ENCODE measurements at regions of chr19 and their contacts with region 1.

Region 1: DNA sequence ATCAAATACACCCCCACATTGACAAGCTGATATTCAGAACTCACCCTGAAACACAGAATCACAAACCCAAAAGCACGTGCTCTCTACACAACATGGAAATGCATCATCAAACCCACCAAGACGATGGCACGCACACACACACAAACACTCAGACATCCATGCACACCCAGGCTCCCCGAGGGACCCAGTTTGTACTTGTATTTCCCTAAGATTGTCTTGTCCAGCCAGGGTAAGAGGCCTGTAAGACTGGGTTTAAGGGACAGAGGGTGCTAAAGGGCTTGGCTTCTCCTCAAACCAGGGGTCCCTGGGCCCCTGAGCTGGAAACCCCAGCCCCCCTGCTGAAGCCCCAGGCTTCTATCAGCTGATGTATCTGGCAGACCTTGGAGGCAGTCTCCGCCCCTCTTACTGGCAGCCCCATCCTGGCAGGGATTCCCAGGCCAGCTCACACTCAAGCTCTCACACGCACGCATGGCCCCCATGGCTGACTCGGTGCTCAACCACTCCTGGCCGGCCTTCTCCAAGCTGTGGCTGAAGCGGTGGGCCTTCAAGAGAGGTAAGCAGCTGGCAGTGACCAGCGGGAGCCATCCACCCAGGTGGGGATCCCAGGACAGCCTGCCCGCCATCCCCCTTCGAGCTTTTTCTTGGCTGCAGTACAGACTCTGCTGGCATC is 6.5 kb downstream of the ARHGEF18 start:
- DNase-seq: no peak
- ATAC-seq: no peak
- H3K4me3 ChIP-seq: no peak overlapping the region
- H3K4me3 Mint-ChIP-seq: peak overlapping the region; percentile 66
- H3K27ac ChIP-seq: peak overlapping the region in 1 of 2 donors; percentile 9
- H3K27ac Mint-ChIP-seq: peak overlapping the region; percentile 92
- H3K4me1 ChIP-seq: peaks cover 80% of the 10 kb centered on the region
- H3K4me1 Mint-ChIP-seq: peaks cover 74% of the 10 kb centered on the region
- H3K27me3 ChIP-seq: no peaks in the 10 kb centered on the region
- H3K27me3 Mint-ChIP-seq: no peaks in the 10 kb centered on the region
- CTCF ChIP-seq: no peak

Region 2: GRCh38 chr19:7366701-7367420 is 11.6 kb after region 1 on chr19:
- CTCF ChIA-PET with region 1: interaction called, 15 read pairs
- POLR2A ChIA-PET with region 1: interaction called, 25 read pairs
- intact Hi-C with region 1: no loop called
- DNase-seq: peak in 3 of 14 experiments; percentile 54 to 60 (median 56)
- ATAC-seq: peak; percentile 67
- H3K4me3 ChIP-seq: no peak overlapping the region
- H3K4me3 Mint-ChIP-seq: no peak overlapping the region
- H3K27ac ChIP-seq: no peak overlapping the region
- H3K27ac Mint-ChIP-seq: peak overlapping the region; percentile 83
- H3K4me1 ChIP-seq: peaks cover 39% of the 10 kb centered on the region
- H3K4me1 Mint-ChIP-seq: peaks cover 47% of the 10 kb centered on the region
- H3K27me3 ChIP-seq: no peaks in the 10 kb centered on the region
- H3K27me3 Mint-ChIP-seq: no peaks in the 10 kb centered on the region
- CTCF ChIP-seq: peak; percentile 55